Left cardiac atrium (tissue), 4 donors: ENCODE measurements at regions of chr12 and their contacts with region 1.

Region 1: GRCh38 chr12:40107098-40107802 is 1.4 kb upstream of the SLC2A13 start:
- DNase-seq: peak; percentile 93
- ATAC-seq: peak; percentile 33 to 38

Region 2: GRCh38 chr12:39736406-39736805 is 370.8 kb before region 1 on chr12:
- intact Hi-C with region 1: no loop called
- DNase-seq: no peak
- ATAC-seq: no peak

Region 3: DNA sequence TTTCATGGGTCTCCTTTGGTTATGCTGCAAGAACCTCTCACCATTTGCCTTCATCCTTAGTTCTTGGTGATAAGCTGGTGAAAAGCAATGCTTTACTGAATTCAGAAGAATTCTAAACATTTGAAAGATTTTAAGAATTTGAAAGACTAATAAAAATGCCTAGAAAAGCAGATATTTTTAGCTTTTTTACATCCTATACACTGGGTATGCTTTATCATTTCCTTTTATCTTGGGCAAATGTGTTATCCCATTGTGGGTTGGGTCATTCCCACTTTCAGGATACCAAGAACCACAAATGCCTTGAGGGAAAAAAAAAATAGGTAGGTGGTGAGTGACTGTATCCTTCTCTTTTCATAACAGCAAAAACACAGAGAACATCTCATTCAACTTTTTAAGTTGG is 290.5 kb before region 1 on chr12:
- intact Hi-C with region 1: no loop called
- DNase-seq: no peak
- ATAC-seq: no peak

Region 4: GRCh38 chr12:40010899-40011774 is 96.1 kb before region 1 on chr12:
- intact Hi-C with region 1: loop called (anchors 1 to 2 kb)
- DNase-seq: peak; percentile 42
- ATAC-seq: peak; percentile 93

Region 5: DNA sequence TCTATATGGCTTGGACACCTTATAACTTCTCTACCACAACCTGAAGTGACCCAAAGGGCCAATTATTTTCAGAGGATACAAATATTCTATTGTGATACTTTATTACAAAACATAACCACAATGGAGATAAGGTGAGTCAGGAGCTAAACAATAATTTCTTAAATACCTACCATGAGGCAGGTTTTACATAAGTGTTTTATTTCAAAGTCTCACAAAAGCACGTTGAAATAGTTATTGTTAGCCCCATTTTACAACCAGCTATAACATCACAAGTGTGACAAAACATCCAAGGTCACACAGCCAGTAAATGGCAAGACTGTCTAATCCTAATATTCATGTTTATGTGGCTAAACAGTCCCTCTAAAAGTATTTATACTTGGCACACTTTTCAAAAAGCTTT is 41.6 kb before region 1 on chr12:
- intact Hi-C with region 1: no loop called
- DNase-seq: no peak
- ATAC-seq: no peak

Region 6: GRCh38 chr12:40208707-40209446 is 101.6 kb after region 1 on chr12:
- intact Hi-C with region 1: no loop called
- DNase-seq: no peak
- ATAC-seq: peak in 1 of 2 donors; percentile 47